T-cell (primary cell): ENCODE measurements at regions of chr3 and their contacts with region 1.

Region 1: GRCh38 chr3:187051719-187052366 is 87.5 kb downstream of the RPL39L start:
- DNase-seq: no peak
- ATAC-seq: no peak
- H3K4me3 ChIP-seq: no peak overlapping the region
- H3K4me3 Mint-ChIP-seq: no peak overlapping the region
- H3K27ac ChIP-seq: no peak overlapping the region
- H3K27ac Mint-ChIP-seq: peak overlapping the region in 1 of 2 donors; percentile 83
- H3K4me1 ChIP-seq: peaks cover 0 to 24% of the 10 kb centered on the region in 2 experiments
- H3K4me1 Mint-ChIP-seq: peaks cover 61 to 87% (median 83%) of the 10 kb centered on the region in 3 donors
- H3K27me3 ChIP-seq: no peaks in the 10 kb centered on the region
- H3K27me3 Mint-ChIP-seq: no peaks in the 10 kb centered on the region

Region 2: DNA sequence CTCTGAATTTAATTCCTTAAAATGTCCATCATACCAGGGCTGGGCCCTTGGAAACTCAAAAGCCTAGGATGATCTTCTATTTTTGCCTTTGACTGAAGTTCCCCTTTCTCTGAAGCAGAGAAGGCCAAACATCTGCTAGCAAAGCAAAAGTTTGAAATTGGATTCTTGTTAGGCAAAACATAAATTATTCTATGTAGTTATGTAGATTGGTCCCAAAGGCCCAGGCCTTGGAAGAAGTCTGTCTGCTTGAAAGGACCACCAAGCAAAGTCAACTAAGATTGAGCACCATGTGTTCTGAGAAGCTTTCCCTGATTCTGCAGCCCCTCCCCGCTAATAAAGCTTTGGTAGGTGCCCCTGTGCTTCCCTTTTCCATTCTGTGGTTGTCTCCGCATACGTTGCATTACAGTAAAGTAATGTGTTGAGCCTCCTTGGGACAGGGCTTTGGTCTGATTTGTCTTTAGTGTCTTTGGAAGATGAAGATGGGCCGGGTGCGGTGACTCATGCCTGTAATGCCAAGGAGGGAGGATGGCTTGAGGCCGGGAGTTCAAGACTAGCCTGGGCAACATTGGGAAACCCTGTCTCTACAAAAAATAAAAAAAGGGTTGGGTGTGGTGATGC is 31.0 kb after region 1 on chr3:
- CTCF ChIA-PET with region 1: no interaction called
- POLR2A ChIA-PET with region 1: interaction called in 1 of 2 experiments, 12 read pairs
- DNase-seq: no peak
- ATAC-seq: no peak
- H3K4me3 ChIP-seq: no peak overlapping the region
- H3K4me3 Mint-ChIP-seq: no peak overlapping the region
- H3K27ac ChIP-seq: no peak overlapping the region
- H3K27ac Mint-ChIP-seq: peak overlapping the region in 1 of 2 donors; percentile 34
- H3K4me1 ChIP-seq: peaks cover 0 to 3% of the 10 kb centered on the region in 2 experiments
- H3K4me1 Mint-ChIP-seq: peaks cover 13 to 17% (median 13%) of the 10 kb centered on the region in 3 donors
- H3K27me3 ChIP-seq: no peaks in the 10 kb centered on the region
- H3K27me3 Mint-ChIP-seq: no peaks in the 10 kb centered on the region